PC-9 (cell line): ENCODE measurements at regions of chr12 and their contacts with region 1.

Region 1: DNA sequence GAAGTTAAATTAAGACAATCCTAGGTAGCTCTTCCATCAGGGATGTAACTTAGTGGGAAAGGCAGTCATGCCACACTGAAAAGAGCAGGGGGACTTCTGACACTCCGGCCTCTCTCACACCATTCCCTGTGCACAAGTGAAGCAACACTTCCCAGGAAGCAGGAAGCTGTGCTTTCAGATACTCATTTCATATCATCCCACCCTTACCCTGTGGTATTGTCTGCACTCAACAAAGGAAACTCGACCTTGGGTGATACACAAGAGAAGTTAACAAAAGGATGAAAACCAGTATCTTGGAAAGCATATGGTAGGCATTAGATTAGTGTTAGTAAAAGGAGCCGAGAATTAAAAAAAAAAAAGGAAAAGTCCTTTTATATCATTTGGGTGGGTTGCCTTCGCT is 61.3 kb upstream of the MDM1 start:
- DNase-seq: no peak
- H3K4me3 ChIP-seq: no peak overlapping the region
- H3K27ac ChIP-seq: no peak overlapping the region
- H3K4me1 ChIP-seq: no peaks in the 10 kb centered on the region
- H3K27me3 ChIP-seq: no peaks in the 10 kb centered on the region
- CTCF ChIP-seq: no peak

Region 2: DNA sequence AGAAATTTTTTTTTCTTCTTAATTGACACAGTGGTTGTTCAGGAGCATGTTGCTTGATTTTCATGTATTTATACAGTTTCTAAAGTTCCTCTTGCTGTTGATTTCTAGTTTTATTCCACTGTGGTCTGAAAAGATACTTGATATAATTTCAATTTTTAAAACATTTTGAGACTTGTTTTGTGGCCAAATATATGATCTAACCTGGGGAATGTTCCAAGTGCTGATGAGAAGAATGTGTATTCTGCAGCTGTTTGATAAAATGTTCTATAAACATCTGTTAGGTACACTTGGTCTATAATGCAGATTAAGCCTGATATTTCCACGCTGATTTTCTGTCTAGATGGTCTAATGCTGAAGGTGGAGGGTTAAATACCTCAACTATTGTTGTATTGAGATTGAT is 555.5 kb before region 1 on chr12:
- CTCF ChIA-PET with region 1: no interaction called
- POLR2A ChIA-PET with region 1: no interaction called
- intact Hi-C with region 1: no loop called
- DNase-seq: no peak
- H3K4me3 ChIP-seq: no peak overlapping the region
- H3K27ac ChIP-seq: no peak overlapping the region
- H3K4me1 ChIP-seq: no peaks in the 10 kb centered on the region
- H3K27me3 ChIP-seq: no peaks in the 10 kb centered on the region
- CTCF ChIP-seq: no peak

Region 3: GRCh38 chr12:67884596-67884995 is 508.8 kb before region 1 on chr12:
- CTCF ChIA-PET with region 1: no interaction called
- POLR2A ChIA-PET with region 1: no interaction called
- intact Hi-C with region 1: loop called (anchors 5 kb)
- DNase-seq: no peak
- H3K4me3 ChIP-seq: no peak overlapping the region
- H3K27ac ChIP-seq: no peak overlapping the region
- H3K4me1 ChIP-seq: no peaks in the 10 kb centered on the region
- H3K27me3 ChIP-seq: no peaks in the 10 kb centered on the region
- CTCF ChIP-seq: no peak

Region 4: DNA sequence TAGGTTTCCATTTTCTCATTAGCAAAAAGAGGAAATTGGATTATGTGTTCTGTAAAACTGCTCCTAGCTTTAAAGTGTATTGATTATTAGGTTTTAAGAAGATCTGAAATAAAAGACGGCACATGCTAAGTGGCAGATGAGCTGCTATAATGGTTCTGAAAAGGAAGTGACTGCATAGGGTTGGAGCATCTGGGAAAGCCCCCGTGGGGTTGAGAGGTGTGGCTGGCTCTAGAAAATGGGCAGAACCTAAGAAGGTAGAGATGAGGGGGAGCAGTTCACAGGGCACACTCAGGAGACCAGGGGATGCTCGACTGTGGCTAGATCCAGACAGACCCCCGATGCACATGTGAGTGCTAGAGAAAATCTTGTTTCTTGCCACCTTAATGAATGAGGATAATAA is 402.3 kb before region 1 on chr12:
- CTCF ChIA-PET with region 1: no interaction called
- POLR2A ChIA-PET with region 1: no interaction called
- intact Hi-C with region 1: no loop called
- DNase-seq: no peak
- H3K4me3 ChIP-seq: no peak overlapping the region
- H3K27ac ChIP-seq: no peak overlapping the region
- H3K4me1 ChIP-seq: no peaks in the 10 kb centered on the region
- H3K27me3 ChIP-seq: no peaks in the 10 kb centered on the region
- CTCF ChIP-seq: no peak